Naive thymus-derived CD4-positive, alpha-beta T cell (primary cell): ENCODE measurements at regions of chr6 and their contacts with region 1.

Region 1: DNA sequence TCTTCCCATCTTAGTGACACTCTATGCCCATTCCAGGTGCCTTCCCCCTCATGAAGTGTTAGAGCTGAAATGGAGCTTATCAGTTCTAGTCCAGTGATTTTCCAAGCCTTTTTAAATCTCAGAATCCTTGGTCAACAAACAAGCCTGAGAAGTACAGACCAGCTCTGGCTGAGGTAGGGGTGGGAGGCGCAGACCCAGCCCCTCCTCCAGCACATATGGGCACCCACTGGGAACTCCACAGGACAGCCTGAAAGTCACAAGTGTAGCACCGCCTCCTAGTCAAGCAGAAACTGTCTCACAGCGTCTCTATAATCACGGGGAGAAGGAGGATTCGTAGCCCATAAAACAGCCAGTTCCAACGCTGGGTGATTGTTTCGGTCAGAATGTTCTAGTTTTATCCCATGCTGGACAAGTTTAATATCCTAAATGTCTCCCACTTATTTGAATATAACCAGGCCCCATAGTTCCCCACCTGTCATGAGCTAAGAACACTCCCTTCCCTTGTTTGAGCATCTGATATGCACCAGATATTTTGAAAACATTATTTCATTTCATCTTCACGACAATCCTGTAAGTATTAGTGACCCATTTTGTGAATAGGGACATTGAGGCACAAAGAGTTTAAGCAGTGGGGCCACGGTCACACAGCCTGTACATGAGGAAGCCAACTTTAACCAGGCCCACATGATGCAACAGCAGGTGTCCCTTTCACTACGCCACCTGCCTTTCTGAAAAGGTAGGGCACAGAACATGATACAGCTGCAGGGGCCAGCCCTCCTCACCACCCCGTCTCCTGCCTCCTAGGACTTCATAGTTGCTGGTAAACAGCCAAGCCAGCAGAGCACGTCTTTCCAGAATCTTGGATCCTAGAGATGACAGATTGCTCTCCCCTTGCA is 40.1 kb downstream of the TRAF3IP2 start:
- DNase-seq: peak in 2 of 9 donors; percentile 16 to 21
- ATAC-seq: peak; percentile 60
- H3K4me3 ChIP-seq: no peak overlapping the region
- H3K4me3 Mint-ChIP-seq: peak overlapping the region in 3 of 10 donors; percentile 3 to 15 (median 3)
- H3K27ac ChIP-seq: no peak overlapping the region
- H3K27ac Mint-ChIP-seq: peak overlapping the region; percentile 44 to 95 (median 85)
- H3K4me1 ChIP-seq: peaks cover 0 to 19% of the 10 kb centered on the region in 2 donors
- H3K4me1 Mint-ChIP-seq: peaks cover 19 to 61% (median 50%) of the 10 kb centered on the region in 7 donors
- H3K27me3 ChIP-seq: no peaks in the 10 kb centered on the region
- H3K27me3 Mint-ChIP-seq: no peaks in the 10 kb centered on the region

Region 2: DNA sequence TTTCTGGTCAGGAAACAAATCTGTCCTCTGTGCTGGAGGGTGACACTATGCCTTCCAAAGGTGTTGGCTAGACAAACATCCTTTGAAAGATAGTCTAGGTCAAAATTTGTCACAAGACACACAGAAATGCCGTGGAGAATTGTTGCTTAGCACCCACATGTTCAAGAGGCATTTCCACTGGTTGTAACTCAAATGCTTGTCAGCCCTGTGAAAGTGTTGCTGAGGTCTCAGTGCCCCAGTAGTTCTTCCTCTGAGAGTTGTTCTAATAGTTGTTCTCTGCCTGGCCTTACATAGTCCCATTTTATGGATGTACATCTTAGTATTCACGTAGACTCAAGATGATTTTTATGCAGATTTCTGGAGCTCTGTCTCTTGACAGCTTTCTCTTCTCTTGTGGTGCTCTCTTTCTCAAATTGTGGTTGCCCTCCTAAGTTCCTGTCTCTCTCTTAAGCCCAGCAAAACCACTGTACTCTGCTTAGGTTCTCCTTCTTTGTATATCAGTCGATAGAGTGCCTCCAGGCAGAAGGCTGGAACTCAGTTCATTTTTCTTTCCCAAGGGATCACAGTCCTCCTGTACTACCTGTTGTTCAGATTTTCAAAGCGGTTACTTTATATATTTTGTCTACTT is 43.1 kb before region 1 on chr6:
- CTCF ChIA-PET with region 1: no interaction called
- POLR2A ChIA-PET with region 1: no interaction called
- intact Hi-C with region 1: loop called in 1 of 2 experiments (anchors 2 kb)
- DNase-seq: peak in 2 of 9 donors; percentile 10 to 23
- ATAC-seq: peak; percentile 70
- H3K4me3 ChIP-seq: no peak overlapping the region
- H3K4me3 Mint-ChIP-seq: peak overlapping the region in 5 of 10 donors; percentile 1 to 51 (median 17)
- H3K27ac ChIP-seq: no peak overlapping the region
- H3K27ac Mint-ChIP-seq: peak overlapping the region in 4 of 9 donors; percentile 14 to 66 (median 52)
- H3K4me1 ChIP-seq: no peaks in the 10 kb centered on the region
- H3K4me1 Mint-ChIP-seq: peaks cover 3 to 27% (median 18%) of the 10 kb centered on the region in 7 donors
- H3K27me3 ChIP-seq: no peaks in the 10 kb centered on the region
- H3K27me3 Mint-ChIP-seq: no peaks in the 10 kb centered on the region

Region 3: GRCh38 chr6:111605100-111605751 is 39.7 kb after region 1 on chr6:
- CTCF ChIA-PET with region 1: no interaction called
- POLR2A ChIA-PET with region 1: no interaction called
- intact Hi-C with region 1: loop called in 1 of 2 experiments (anchors 5 kb)
- DNase-seq: peak in 8 of 9 donors; percentile 12 to 60 (median 34)
- ATAC-seq: peak; percentile 56
- H3K4me3 ChIP-seq: peak overlapping the region; percentile 85
- H3K4me3 Mint-ChIP-seq: peak overlapping the region; percentile 89 to 97 (median 94)
- H3K27ac ChIP-seq: peak overlapping the region; percentile 84
- H3K27ac Mint-ChIP-seq: peak overlapping the region; percentile 90 to 98 (median 95)
- H3K4me1 ChIP-seq: peaks cover 13 to 15% of the 10 kb centered on the region in 2 donors
- H3K4me1 Mint-ChIP-seq: peaks cover 25 to 61% (median 58%) of the 10 kb centered on the region in 7 donors
- H3K27me3 ChIP-seq: no peaks in the 10 kb centered on the region
- H3K27me3 Mint-ChIP-seq: peaks cover 0 to 2% (median 0%) of the 10 kb centered on the region in 5 donors